HEK293T (cell line): ENCODE measurements at regions of chr5 and their contacts with region 1.

Region 1: DNA sequence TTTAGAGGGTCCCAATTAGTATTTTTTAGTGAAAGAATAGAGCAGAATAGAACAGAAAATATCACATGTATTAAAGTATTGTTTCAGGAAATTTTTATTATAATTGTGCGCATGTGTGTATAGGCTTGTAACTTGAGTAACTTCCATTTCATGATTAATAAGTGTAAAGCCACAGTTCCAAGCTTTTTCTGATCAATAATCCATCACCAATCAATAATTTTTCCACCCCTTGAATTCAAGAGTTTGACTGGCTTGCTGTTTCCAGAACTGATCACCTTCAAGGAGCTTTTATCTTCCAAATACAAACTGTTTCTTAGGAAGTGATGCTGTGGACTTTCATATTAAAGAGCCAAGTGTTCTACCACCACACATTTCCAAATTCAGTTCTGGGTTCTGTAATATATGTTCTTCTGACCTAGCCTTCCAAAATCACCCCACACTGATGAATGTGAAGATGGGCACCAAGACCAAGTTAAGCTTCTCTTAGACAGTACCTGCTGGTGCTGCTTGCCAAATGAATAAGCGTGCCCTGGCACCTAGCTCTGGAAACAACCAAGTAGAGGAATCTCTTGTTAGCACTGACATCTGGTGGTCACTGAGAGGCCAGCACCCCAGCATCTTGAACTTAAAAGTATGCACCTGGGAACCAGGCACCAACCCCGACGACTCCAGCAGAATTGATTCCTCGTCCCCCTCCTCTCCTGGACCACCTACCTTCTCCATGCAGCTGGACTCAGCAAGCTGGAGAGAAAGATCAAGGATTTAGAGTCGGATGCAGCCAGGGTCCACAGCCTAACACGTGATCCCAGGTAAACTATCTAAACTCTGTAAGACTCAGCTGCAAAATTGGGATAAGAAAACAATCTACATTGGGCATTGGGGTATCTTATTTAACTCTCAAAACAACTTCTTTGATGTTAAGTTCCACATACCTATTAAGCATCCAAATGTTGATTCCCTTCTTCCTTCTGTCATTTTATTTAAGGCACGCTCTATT is 89.6 kb downstream of the SLC1A3 start:
- DNase-seq: peak; percentile 65

Region 2: DNA sequence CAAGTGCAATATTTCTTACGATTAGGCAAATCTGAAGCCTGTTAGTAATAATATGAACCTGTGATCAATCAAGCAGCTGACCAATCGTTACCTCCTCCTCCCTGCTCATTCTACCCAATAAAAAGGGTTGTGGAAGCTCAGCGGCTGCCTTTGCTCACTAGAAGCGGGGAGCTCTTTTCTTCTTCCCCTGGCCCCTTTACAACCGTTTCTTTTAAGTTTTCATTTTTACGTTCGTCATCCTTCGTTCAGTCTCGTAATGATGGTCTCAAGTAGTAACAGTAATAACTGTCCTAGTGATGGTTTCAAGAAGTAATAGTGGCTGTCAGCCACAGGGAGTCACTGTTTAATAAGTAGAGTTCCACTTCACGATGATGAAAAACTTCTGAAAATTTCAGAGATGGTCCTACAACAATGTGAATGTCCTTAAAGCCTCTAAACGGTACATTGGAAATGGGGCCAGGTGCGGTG is 635.5 kb before region 1 on chr5:
- CTCF ChIA-PET with region 1: interaction called, 10 read pairs
- POLR2A ChIA-PET with region 1: no interaction called
- DNase-seq: peak; percentile 23